H1 (cell line): ENCODE measurements at regions of chr3 and their contacts with region 1.

Region 1: DNA sequence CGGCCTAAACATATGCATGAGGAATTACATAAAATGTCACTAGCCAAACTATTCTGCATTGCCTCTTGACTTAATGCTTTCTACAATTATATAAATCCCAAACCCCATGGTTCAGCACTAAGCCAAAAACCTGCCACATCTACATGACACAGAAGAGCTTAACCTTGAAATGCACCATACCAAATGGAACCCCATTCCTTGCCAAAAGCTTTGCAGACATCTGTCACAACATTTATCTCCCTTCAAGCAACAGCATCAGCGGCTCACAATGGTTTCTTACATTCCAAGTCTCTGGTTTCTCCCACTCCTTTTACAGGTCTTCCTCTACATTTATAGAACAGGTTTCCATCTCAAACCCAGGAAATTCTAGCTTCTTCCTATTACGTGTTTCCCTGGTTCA is 58.4 kb upstream of the GYG1 start:
- DNase-seq: no peak
- H3K4me3 ChIP-seq: no peak overlapping the region
- H3K27ac ChIP-seq: no peak overlapping the region
- H3K4me1 ChIP-seq: no peaks in the 10 kb centered on the region
- H3K27me3 ChIP-seq: no peaks in the 10 kb centered on the region
- CTCF ChIP-seq: no peak
- EP300 ChIP-seq: no peak
- POLR2A ChIP-seq: no peak
- RAD21 ChIP-seq: no peak

Region 2: GRCh38 chr3:148943506-148944205 is 10.7 kb after region 1 on chr3:
- CTCF ChIA-PET with region 1: interaction called, 11 read pairs
- POLR2A ChIA-PET with region 1: no interaction called
- DNase-seq: no peak
- H3K4me3 ChIP-seq: no peak overlapping the region
- H3K27ac ChIP-seq: no peak overlapping the region
- H3K4me1 ChIP-seq: no peaks in the 10 kb centered on the region
- H3K27me3 ChIP-seq: no peaks in the 10 kb centered on the region
- CTCF ChIP-seq: peak in 2 of 3 experiments; percentile 57 to 59; a peak in 3 of 4 replicates
- EP300 ChIP-seq: no peak
- POLR2A ChIP-seq: no peak
- RAD21 ChIP-seq: peak; percentile 87 to 89